ENCODE measurements at regions of chr10 and their contacts with region 1.

Region 1: DNA sequence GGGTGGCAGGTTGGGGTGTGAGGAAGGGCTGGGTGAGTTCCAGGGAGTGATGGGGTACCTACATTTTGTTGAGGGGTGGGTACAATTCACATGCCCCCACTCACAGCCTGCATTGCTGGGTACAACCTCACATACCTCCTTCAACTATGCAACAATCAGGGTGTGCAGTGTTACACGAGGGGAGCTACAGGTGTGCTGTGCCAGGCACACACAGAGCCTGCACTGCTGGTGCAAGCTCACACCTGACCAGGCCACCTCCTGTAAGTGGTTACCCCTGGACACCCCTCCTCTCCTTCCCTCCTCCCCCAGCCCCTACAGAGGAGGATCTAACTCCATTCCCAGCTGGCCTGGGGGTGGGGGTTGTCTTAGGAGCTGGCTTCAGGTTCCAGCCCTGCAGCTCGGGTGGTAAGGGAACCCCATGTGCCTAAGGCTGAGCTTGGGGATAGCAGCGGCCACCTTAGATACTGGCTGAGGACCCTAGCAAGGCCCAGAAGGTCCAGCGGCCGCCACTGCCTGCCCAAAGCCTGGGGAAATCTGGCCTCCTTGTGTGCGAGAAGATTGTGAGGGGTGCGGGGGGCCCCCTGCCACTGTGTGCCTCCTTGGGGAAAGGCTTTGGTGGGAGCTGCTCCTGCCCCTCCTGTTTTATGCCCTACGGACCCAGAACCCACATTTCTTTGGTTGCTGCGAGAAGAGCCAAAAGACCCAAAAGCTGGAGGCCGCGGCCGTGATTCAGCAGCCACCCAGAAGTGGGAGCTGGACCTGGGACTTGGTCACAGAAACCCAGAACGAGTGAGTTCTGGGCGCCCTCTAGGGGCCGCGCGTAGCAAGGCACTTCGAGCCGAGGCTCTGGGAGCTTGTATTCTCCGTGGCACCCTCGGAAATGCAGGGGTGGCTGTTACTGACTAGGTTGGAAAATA is 10.8 kb downstream of the TLX1 start:
- DNase-seq: peak; percentile 16
- H3K4me3 ChIP-seq: no peak overlapping the region; the same call in 1 of the 2 replicates
- CTCF ChIP-seq: peak; percentile 95

Region 2: DNA sequence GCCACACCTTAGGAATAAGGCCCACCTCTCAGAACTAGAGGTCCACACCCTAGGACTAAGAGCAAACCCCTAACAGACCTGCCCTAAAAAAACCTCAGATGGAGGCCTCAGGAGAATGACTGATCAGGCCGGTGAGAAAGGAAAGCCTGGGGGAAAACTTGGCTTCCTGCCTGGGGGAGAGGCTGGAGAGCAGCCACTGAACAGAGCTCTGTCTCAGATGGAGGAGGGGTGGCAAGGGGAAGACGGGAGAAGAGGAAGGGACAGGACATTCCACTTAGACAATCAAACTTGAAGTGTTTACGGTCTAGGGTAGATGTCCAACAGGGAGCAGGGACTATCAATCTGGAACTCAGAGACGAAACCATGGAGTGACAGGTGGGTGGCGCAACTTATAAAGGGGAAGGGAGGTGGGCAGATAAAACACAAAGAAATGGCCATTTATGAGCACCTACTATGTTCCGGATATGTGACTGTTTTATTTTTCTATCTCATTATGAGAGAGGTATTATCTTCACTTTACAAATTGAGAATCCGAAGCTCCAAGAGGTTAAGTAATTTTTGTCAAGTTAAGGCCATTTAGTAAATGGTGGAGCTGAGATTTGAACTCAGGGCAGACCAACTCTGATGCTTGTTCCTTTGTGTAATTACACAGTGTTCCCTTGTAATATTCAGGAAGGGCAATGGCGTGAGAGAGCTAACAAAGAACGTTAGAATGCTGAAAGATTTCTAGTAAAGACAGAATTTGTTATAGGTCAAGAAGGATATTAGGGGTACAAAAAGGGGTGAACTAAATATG is 1214.8 kb before region 1 on chr10:
- CTCF ChIA-PET with region 1: no interaction called
- POLR2A ChIA-PET with region 1: no interaction called
- DNase-seq: no peak
- H3K4me3 ChIP-seq: no peak overlapping the region
- CTCF ChIP-seq: no peak

Region 3: GRCh38 chr10:101012525-101013364 is 129.1 kb before region 1 on chr10:
- CTCF ChIA-PET with region 1: interaction called, 11 read pairs
- POLR2A ChIA-PET with region 1: no interaction called
- DNase-seq: no peak
- H3K4me3 ChIP-seq: no peak overlapping the region
- CTCF ChIP-seq: peak; percentile 94

Region 4: GRCh38 chr10:101050208-101051069 is 91.4 kb before region 1 on chr10:
- CTCF ChIA-PET with region 1: interaction called, 129 read pairs
- POLR2A ChIA-PET with region 1: interaction called, 4 read pairs
- DNase-seq: no peak
- H3K4me3 ChIP-seq: peak overlapping the region; percentile 40
- CTCF ChIP-seq: peak; percentile 83

Region 5: DNA sequence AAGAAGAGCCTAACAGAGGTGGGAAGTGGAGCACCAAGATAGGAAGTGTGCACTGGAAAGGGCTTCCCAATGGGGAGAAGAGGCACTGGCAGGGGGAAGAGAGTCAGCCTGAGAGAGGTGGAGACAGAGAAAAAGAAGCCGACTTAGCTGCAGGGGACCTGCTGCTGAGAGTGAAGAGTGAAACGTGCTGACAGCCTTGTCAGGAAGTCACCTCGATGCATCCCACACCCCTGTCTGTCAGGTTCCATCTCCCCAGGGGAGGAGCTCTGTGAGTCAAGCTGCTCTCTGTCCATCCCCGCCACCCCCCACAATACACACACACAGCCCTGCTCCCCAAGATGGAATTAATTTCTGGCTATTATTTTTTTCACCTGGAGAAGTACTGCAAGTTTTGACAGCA is 66.1 kb before region 1 on chr10:
- CTCF ChIA-PET with region 1: interaction called, 24 read pairs
- POLR2A ChIA-PET with region 1: no interaction called
- DNase-seq: no peak
- H3K4me3 ChIP-seq: no peak overlapping the region
- CTCF ChIP-seq: no peak

Region 6: DNA sequence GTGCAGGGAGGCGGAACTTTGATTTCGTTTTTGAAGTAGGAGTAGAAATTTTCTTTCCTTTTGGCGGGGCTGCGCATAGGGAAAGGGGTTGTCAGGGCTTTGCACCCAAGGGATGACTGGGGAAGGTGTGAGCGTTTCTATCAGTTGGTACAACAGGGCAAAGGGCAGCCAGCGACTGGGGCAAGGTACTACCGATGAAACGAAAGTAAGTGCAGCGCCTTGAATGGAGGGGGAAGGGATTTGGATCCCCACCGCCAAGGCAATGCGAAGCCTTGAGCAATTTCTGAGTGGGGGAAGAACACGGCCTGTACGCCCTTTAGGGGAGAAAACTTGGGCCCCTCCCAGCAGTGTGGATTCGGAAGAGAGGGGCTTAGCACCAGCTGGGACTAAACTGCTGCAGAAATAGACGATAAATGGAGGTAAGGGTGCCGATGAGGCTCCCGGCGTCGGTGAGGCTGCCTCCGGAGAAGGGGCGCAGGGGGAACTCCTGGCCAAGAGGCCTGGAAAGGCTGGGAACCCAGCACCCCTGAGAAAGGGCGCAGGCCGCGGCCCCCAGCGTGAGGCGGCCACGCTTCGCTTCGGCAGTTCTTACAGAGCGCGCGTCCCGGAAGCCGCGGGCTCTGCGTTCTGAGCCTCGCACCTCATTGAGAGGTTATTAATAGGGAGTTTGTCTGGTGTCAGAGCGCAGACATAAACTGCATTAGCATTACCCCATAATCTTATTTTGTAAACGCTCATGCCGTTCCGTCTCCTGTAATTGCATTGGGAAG is 20.8 kb before region 1 on chr10:
- CTCF ChIA-PET with region 1: interaction called, 35 read pairs
- POLR2A ChIA-PET with region 1: no interaction called
- DNase-seq: no peak
- H3K4me3 ChIP-seq: peak overlapping the region; percentile 50
- CTCF ChIP-seq: no peak

Region 7: DNA sequence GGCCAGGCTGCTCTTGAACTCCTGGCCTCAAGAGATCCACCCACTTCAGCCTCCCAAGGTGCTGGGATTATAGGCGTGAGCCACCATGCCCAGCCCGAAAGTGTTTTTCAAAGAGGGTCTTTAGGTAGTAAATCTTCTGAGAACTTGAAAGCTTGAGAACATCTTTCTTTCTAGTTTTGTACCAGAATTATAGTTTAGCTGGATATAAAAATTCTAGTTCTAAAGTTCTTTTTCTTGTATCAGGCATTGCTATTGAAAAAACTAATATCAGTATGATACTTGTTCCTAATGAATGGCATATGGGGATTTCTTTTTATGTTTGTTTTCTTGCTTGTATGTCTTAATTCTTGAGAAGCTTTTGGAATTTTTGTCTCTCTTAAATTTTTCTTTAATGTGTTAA is 32.4 kb after region 1 on chr10:
- CTCF ChIA-PET with region 1: interaction called, 13 read pairs
- POLR2A ChIA-PET with region 1: no interaction called
- DNase-seq: no peak
- H3K4me3 ChIP-seq: no peak overlapping the region
- CTCF ChIP-seq: no peak

Region 8: DNA sequence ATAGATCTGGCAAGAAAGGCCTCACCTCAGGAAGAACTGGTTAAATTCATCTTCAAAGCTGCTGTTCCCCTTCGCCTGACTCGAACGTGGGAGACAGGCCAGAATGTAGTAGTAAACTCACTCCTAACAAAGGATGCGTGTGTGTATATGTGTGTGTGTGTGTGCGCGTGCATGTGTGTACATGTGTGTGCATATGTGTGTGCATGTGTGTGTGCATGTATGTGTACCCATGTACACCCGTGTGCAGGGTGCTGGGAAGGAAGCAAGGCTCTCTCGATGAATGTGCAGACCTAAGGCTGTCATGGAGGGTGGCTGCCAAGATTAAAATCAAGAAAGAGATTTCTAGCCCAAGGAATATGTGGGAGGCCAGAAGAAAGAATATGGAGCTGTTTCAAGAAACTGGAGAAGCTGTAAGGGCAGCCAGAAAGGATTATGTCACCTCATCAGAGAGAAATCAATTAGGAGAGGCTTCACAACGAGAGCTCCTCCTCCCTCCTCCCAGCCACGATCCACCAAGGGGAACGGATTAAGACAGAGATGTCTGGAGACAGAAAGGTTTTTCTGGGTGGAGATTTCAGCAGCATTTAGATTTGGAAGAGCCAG is 121.4 kb after region 1 on chr10:
- CTCF ChIA-PET with region 1: no interaction called
- POLR2A ChIA-PET with region 1: no interaction called
- DNase-seq: no peak
- H3K4me3 ChIP-seq: no peak overlapping the region
- CTCF ChIP-seq: no peak

Measured in AG04449 (cell line).